Astrocyte of the cerebellum (primary cell): ENCODE measurements at regions of chr12 and their contacts with region 1.

Region 1: DNA sequence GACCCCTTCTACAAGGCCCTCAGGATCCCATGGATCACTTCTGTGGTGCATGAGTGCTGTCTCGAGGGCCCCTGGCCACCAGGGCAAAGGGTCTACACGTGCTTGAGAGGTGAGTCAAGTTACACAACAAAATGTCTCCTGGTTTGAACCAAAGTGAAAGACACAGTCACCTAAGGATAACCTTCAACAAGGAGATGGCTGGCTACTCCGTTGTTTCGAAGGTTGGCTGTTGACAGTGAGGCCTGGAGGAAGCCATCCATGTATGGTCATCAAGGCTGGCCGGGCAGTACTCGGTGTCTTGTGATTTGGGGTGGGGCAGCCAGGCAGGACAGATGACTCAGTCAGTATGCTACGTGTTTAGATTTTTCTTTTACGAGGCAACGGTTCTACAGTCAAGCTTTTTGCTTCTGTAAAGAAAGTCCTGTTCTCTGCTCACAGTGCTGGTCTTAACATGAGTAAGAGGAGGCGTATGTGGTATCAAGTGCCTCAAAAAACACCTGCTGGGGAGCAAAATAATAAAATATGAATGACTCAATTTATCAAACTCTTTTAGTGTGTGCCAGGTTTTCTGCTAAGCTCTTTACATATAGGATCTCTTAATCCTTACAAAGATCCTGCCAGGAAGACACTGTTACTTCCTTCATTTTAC is 18.0 kb upstream of the NT5DC3 start:
- DNase-seq: peak; percentile 86
- H3K4me3 ChIP-seq: no peak overlapping the region
- CTCF ChIP-seq: no peak

Region 2: GRCh38 chr12:103560604-103561573 is 298.2 kb before region 1 on chr12:
- in situ Hi-C with region 1: loop called (anchors 25 kb)
- DNase-seq: peak; percentile 75
- H3K4me3 ChIP-seq: no peak overlapping the region
- CTCF ChIP-seq: no peak

Region 3: DNA sequence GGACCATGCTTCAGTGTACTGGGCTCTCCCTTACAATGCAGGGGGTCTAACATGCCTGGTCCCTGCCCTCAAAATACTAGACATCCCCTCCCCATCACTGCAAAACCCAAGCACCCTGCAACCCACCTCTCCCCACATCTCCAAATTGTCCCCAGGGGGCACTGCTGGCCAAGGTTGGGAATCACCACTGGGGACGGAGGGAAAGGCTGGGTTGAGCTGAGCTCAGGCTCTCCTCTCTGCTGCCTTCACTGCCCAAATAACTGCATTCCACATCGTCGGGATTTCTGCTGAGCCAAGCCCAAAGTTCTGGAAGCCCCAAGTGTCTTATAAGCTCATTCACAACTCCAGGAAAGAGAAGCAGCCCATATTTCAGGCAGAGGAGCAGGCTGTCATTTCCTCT is 87.6 kb before region 1 on chr12:
- in situ Hi-C with region 1: no loop called
- DNase-seq: peak; percentile 31
- H3K4me3 ChIP-seq: no peak overlapping the region
- CTCF ChIP-seq: peak; percentile 77

Region 4: DNA sequence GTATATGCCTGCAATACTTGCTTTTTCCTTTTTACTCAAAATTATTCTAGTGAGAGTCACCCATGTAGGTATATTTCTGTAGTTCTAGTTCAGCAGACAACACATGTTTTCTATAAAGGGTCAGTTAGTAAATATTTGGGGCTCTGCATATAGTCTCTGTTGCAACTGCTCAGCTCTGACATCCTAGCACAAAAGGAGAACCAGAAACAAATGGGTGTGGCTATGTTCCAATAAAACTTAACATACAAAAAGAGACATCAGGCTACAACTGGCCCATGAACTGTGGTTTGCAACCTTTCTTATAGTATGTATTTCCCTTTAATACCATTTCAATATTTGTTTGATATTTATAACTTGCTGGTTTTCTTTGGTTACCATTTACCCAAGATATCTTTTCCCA is 30.0 kb before region 1 on chr12:
- in situ Hi-C with region 1: no loop called
- DNase-seq: no peak
- H3K4me3 ChIP-seq: no peak overlapping the region
- CTCF ChIP-seq: no peak